MCF 10A (cell line): ENCODE measurements at regions of chr20 and their contacts with region 1.

Region 1: GRCh38 chr20:39839399-39840119 is 849.5 kb downstream of the MAFB start:
- DNase-seq: no peak
- H3K4me3 Mint-ChIP-seq: no peak overlapping the region
- H3K27ac Mint-ChIP-seq: no peak overlapping the region
- H3K4me1 Mint-ChIP-seq: no peaks in the 10 kb centered on the region
- H3K27me3 Mint-ChIP-seq: no peaks in the 10 kb centered on the region
- CTCF ChIP-seq: no peak

Region 2: DNA sequence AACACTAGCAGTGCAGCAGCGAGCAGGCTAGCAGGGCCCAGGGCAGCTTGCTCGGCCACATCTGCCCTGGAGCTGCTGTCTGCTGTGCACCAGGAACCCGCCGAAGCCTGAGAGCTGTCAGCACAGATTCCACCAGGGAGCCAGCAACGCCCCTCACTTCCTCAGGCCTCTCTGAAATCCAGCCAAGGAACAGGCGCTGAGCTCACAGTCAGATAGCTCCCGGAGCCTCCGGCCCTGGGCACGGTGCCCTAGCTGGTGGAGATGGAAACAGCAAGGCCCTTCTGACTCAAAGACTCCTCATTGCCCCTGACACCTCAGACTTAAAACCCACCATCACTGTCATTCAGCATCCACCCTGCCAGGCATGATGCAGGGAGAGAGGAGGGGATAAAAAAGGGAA is 10.1 kb after region 1 on chr20:
- CTCF ChIA-PET with region 1: interaction called, 20 read pairs
- POLR2A ChIA-PET with region 1: interaction called, 9 read pairs
- intact Hi-C with region 1: no loop called
- DNase-seq: peak; percentile 94
- H3K4me3 Mint-ChIP-seq: no peak overlapping the region
- H3K27ac Mint-ChIP-seq: no peak overlapping the region
- H3K4me1 Mint-ChIP-seq: peaks cover 38% of the 10 kb centered on the region
- H3K27me3 Mint-ChIP-seq: no peaks in the 10 kb centered on the region
- CTCF ChIP-seq: no peak

Region 3: DNA sequence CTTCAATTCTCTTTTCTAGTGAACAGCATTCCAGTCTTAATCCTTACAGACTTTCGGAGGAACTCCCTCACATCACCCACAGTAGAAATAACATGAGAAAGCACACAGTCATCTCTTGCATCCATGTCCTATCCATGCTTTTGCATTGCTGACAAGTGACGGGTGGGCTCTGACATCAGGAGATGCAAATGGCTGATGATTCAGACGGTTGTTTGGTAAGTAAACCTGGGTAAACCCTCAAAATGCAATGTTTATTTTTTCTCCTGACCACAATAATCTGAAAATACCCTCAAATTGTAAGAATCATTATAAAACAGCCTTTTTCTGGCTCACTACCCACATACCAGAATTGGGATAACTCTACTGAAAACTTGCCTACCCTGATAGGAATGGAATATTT is 57.5 kb after region 1 on chr20:
- CTCF ChIA-PET with region 1: no interaction called
- POLR2A ChIA-PET with region 1: no interaction called
- intact Hi-C with region 1: no loop called
- DNase-seq: peak; percentile 59
- H3K4me3 Mint-ChIP-seq: no peak overlapping the region
- H3K27ac Mint-ChIP-seq: no peak overlapping the region
- H3K4me1 Mint-ChIP-seq: peaks cover 8% of the 10 kb centered on the region
- H3K27me3 Mint-ChIP-seq: no peaks in the 10 kb centered on the region
- CTCF ChIP-seq: no peak